PC-9 (cell line): ENCODE measurements at regions of chr20 and their contacts with region 1.

Region 1: DNA sequence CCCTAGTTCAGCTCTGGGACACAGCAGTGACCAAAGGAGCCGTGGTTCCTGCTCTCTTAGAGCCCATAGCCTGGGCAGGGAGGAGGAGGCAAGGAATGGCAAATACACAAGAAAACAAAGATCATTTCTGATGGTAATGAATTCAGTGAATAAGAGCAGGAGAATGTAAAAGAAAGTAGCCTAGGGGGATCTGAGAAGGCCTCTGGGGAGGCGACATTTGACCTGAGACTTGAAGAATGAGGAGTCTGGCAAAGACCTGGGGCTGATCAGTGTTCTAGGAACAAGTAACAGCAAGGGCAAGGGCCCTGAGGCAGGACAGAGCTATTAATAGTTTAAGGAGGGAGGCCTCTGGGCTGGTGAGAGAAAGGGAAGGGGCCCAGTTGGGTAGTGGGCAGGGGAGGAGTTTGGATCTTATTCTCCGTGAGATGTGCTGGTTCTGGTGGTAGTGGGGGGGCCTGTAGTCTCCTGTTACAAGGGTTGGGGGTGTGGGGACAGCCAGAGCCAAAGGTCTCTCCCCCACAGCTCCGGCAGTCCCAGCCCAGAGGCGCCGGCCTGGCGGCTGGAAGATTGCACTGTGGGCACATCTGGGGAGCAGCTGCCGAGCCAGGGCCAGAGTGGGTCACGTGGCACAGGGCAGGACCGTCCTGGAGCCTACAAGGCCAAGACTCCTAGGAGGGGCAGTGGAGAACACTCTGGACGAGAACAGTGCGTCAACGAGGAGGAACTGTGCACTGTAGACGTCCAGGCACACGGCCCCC is 9.3 kb upstream of the ID1 start:
- DNase-seq: peak; percentile 60 to 87
- H3K4me3 ChIP-seq: no peak overlapping the region
- H3K27ac ChIP-seq: peak overlapping the region; percentile 96
- H3K4me1 ChIP-seq: peaks cover 44% of the 10 kb centered on the region
- H3K27me3 ChIP-seq: no peaks in the 10 kb centered on the region
- CTCF ChIP-seq: no peak

Region 2: DNA sequence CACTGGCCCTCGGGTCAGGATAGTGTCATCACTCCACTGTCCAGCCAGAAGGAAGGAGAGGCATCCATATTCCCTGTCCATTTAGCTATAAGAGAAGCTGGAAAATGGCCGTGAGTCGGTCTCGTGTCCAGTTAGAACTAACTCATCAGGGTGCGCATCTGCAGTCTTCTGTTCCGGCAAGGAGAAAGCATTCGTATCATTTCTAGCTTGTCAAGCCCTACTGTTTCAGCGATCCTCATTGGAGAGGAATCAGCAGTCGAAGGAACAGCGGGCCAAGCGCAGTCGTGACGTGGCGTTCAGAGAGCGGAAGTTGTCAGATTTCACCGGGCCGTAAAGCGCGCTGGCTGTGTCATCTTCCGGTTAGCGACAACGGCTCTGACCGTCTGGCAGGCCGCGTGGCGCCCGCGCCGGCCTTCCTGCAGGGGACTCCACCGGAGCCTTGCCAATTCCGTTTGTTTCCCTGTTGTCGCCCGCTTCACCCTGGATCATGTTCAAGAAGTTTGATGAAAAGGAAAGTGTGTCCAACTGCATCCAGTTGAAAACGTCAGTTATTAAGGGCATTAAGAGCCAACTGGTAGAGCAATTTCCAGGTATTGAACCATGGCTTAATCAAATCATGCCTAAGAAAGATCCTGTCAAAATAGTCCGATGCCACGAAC is 48.7 kb before region 1 on chr20:
- CTCF ChIA-PET with region 1: interaction called, 3 read pairs
- POLR2A ChIA-PET with region 1: interaction called, 37 read pairs
- intact Hi-C with region 1: loop called (anchors 1 kb)
- DNase-seq: peak; percentile 69 to 82
- H3K4me3 ChIP-seq: peak overlapping the region; percentile 61
- H3K27ac ChIP-seq: peak overlapping the region; percentile 89
- H3K4me1 ChIP-seq: peaks cover 50% of the 10 kb centered on the region
- H3K27me3 ChIP-seq: no peaks in the 10 kb centered on the region
- CTCF ChIP-seq: no peak

Region 3: GRCh38 chr20:31566658-31567379 is 29.0 kb before region 1 on chr20:
- CTCF ChIA-PET with region 1: interaction called, 12 read pairs
- POLR2A ChIA-PET with region 1: interaction called, 26 read pairs
- intact Hi-C with region 1: loop called (anchors 1 kb)
- DNase-seq: peak; percentile 95 to 99
- H3K4me3 ChIP-seq: peak overlapping the region; percentile 47; the same call in 1 of the 2 replicates
- H3K27ac ChIP-seq: peak overlapping the region; percentile 99
- H3K4me1 ChIP-seq: peaks cover 83% of the 10 kb centered on the region
- H3K27me3 ChIP-seq: no peaks in the 10 kb centered on the region
- CTCF ChIP-seq: 0 out of 2 replicates have a peak, but pooled peaks have one; percentile 47

Region 4: DNA sequence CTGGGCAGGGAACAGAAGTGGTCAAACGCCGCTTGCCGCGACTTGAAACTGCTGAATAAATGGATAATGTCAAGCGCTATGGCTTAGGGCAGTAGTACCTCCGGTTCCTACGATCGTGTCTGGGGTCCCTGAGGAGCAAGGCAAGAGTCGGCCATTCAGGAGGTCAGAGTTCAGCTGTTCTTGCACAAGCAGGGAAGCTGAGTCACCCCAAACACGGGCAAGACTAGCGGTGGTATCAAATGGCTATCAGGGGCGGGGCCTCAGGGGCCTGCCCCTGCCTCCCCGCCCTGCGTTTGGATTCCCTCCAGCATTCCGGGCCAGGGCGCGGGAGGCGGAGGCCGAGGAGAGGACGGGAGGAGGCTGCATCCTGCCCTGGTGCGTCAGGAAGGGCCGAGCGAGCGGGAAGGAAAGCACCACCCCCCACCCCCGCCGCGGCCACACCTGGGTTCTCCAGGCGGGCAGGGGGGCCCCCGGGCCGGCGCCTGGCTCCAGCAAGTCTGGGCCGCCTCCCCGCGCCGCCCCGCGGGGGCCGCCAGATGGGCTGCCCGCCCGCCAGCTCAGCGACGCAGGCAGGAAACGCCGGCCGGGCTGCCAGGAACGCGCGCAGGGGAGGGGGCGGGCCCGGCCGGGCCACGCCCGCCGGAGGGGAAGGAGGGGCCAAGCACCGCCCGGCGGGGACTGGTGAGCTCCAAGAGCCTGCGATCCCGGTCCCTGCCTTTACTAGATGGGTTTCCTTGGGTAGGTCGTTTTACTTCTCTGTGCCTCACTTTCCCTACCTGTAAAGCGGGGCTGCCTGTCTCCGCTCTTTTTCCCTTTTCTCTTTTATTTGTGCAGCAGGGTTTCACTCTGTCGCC is 22.9 kb before region 1 on chr20:
- CTCF ChIA-PET with region 1: interaction called, 4 read pairs
- POLR2A ChIA-PET with region 1: interaction called, 82 read pairs
- intact Hi-C with region 1: loop called (anchors 1 kb)
- DNase-seq: peak; percentile 95 to 100
- H3K4me3 ChIP-seq: peak overlapping the region; percentile 64
- H3K27ac ChIP-seq: peak overlapping the region; percentile 96
- H3K4me1 ChIP-seq: peaks cover 46% of the 10 kb centered on the region
- H3K27me3 ChIP-seq: no peaks in the 10 kb centered on the region
- CTCF ChIP-seq: no peak

Region 5: GRCh38 chr20:31712564-31713311 is 116.9 kb after region 1 on chr20:
- CTCF ChIA-PET with region 1: no interaction called
- POLR2A ChIA-PET with region 1: no interaction called
- intact Hi-C with region 1: loop called (anchors 2 kb)
- DNase-seq: peak; percentile 90 to 95
- H3K4me3 ChIP-seq: peak overlapping the region; percentile 47; the same call in 1 of the 2 replicates
- H3K27ac ChIP-seq: peak overlapping the region; percentile 99
- H3K4me1 ChIP-seq: peaks cover 97% of the 10 kb centered on the region
- H3K27me3 ChIP-seq: no peaks in the 10 kb centered on the region
- CTCF ChIP-seq: 0 out of 2 replicates have a peak, but pooled peaks have one; percentile 19

Region 6: DNA sequence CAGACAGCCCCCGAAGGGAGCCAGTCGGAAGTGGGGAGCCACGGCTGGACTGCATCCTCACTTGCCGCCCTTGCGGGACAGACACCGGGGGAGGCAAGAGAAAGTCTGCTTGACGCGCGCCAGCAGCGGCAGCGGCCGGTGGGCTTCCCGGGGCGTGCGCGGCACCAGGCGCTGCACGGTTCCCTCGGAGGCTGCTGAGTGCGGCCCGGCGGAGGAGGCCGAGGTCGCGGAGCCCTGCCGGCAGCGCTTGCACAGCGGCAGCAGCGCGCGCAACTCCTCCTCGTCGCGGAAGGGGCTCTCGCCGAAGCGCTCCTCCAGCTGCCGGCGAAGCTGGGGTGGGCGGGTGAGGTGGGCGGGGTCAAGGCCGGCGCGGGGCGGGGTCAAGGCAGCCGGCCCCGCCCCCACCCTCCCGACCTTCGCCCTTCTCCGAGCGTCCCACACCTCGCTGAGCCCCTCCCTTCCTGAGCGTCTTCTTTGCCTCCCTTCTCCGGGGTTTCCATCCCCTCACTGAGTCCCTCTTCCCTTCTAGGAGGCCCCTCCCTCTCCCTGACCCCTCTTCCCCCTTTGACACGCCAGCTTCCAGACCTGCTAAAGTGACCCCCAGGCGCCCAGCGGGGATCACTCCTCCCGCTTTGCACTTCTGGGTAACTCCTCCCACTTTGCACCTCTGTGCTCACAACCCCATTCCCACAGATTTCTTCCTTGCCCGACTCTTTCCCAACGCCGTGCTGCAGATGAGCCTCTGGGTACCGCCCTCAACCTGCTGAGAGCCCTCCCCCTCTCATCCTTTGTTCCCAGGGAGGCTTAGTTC is 265.7 kb after region 1 on chr20:
- CTCF ChIA-PET with region 1: no interaction called
- POLR2A ChIA-PET with region 1: no interaction called
- intact Hi-C with region 1: no loop called
- DNase-seq: peak in 1 of 2 experiments; percentile 56
- H3K4me3 ChIP-seq: peak overlapping the region; percentile 43
- H3K27ac ChIP-seq: no peak overlapping the region
- H3K4me1 ChIP-seq: no peaks in the 10 kb centered on the region
- H3K27me3 ChIP-seq: peaks cover 92% of the 10 kb centered on the region
- CTCF ChIP-seq: no peak

Region 7: GRCh38 chr20:32263398-32263954 is 667.6 kb after region 1 on chr20:
- CTCF ChIA-PET with region 1: interaction called, 13 read pairs
- POLR2A ChIA-PET with region 1: no interaction called
- intact Hi-C with region 1: no loop called
- DNase-seq: no peak
- H3K4me3 ChIP-seq: no peak overlapping the region
- H3K27ac ChIP-seq: no peak overlapping the region
- H3K4me1 ChIP-seq: no peaks in the 10 kb centered on the region; the same call in 1 of the 2 replicates
- H3K27me3 ChIP-seq: no peaks in the 10 kb centered on the region
- CTCF ChIP-seq: no peak